Endothelial cell of umbilical vein (primary cell): ENCODE measurements at regions of chr22 and their contacts with region 1.

Region 1: DNA sequence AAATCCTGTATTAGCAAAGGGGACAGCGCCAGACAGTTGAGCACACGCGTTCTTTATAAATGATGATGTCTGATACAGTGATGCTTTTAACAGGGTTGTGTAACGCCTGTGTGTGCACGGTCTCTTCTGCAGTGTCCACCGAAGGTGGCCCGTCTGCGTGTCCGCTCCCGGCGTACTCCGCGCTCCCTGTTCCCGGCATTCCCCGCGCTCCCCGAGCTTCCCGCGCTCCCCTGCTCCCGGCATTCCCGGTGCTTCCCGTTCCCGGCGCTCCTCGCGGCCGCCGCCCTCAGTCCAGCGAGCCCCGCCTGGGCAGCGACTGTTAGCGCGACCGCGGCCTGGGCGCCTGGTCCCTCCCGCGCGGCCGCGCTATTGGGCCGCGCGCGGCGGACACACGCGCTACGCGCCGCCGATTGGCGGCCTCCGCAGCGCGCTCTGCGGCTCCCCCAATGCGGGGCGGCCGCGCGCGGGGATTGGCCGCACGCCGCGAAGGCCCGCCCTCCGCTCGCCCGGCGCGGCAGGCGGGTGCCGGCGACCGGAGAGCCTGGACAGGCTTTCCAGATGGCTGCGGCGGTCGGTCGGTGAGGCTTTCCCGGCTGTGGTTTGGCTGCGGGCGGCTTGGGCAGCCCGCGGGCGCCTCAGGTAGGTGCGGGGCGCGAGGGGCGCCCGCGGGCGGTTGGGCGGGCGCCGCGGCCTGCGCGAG is at the start of gene DGCR8:
- DNase-seq: peak; percentile 96
- H3K4me3 ChIP-seq: peak within 1 kb of the TSS; percentile 60 to 96 (median 78)
- H3K27ac ChIP-seq: peak within 1 kb of the TSS; percentile 85
- H3K4me1 ChIP-seq: peaks cover 19% of the 10 kb centered on the region
- H3K27me3 ChIP-seq: no peaks in the 10 kb centered on the region
- CTCF ChIP-seq: no peak
- POLR2A ChIP-seq: peak; percentile 95
- total RNA-seq, gene DGCR8: 64.2 and 69.7 TPM in 2 replicates

Region 2: DNA sequence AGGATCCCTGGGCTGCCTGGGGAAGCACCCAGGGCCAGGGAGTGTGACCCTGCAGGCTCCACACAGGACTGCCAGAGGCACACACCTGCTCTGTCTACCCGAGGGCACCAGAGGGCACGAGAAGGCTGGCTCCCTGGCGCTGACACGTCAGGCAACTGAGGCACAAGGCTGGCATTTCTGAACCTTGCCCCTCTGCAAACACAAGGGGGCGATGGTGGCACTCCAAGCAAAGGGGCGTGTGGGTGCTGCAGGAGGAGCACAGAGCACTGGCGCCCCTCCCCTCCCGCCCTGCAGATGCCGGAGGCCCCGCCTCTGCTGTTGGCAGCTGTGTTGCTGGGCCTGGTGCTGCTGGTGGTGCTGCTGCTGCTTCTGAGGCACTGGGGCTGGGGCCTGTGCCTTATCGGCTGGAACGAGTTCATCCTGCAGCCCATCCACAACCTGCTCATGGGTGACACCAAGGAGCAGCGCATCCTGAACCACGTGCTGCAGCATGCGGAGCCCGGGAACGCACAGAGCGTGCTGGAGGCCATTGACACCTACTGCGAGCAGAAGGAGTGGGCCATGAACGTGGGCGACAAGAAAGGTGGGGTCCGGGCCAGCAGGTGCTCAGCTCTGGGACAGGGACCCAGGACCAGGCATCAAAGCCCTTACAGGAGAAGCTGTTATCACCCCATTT is 117.5 kb before region 1 on chr22:
- CTCF ChIA-PET with region 1: no interaction called
- POLR2A ChIA-PET with region 1: no interaction called
- dilution Hi-C with region 1: no loop called
- intact Hi-C with region 1: loop called (anchors 2 kb)
- DNase-seq: peak; percentile 75
- H3K4me3 ChIP-seq: no peak overlapping the region
- H3K27ac ChIP-seq: peak overlapping the region; percentile 4
- H3K4me1 ChIP-seq: peaks cover 28% of the 10 kb centered on the region
- H3K27me3 ChIP-seq: no peaks in the 10 kb centered on the region
- CTCF ChIP-seq: peak; percentile 54 to 83
- POLR2A ChIP-seq: no peak

Region 3: DNA sequence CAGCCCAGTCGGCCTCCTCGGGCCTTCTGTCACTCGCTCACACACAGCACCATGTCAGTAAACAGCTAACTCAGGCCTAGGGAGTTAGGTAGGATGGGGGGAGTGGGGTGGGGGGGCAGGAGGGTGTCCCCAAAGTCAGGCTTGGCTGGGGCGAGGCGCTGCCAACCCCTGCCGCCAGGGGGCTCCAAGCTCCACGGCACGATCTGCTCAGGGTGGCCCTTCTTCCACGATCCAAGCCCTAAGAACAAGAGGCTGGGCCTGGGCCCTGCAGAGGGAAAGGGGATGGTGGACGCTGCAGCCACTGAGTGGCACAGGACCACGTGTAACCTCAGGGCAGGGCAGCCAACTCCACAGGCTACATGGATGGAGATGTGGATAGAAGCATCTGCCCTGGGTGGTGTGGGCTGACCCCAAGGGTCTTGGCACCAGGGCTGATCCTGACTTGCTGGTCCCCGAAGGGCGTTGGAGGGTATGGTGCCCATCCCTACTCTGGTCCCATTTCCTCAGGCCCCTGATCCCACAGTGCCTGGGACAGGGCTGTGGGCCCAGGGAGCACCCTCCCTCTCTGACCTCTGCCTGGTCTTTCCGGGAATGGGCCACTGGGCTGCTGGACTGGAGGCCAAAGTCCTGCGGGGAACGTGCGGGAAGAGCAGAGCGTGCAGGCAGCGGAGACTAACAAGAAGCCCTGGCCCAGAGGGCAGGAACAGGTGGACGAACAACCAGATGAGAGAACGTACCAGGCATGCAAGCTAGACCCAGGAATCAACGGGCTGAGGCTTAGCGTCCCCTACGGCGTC is 109.2 kb before region 1 on chr22:
- CTCF ChIA-PET with region 1: interaction called, 3 read pairs
- POLR2A ChIA-PET with region 1: no interaction called
- dilution Hi-C with region 1: no loop called
- intact Hi-C with region 1: loop called (anchors 1 kb)
- DNase-seq: peak; percentile 56
- H3K4me3 ChIP-seq: no peak overlapping the region
- H3K27ac ChIP-seq: no peak overlapping the region
- H3K4me1 ChIP-seq: peaks cover 26% of the 10 kb centered on the region
- H3K27me3 ChIP-seq: no peaks in the 10 kb centered on the region
- CTCF ChIP-seq: peak; percentile 69 to 96
- POLR2A ChIP-seq: no peak

Region 4: GRCh38 chr22:20020533-20021195 is 59.2 kb before region 1 on chr22 and contains the start of gene TANGO2:
- CTCF ChIA-PET with region 1: no interaction called
- POLR2A ChIA-PET with region 1: no interaction called
- dilution Hi-C with region 1: no loop called
- intact Hi-C with region 1: loop called (anchors 2 kb)
- DNase-seq: peak; percentile 88
- H3K4me3 ChIP-seq: peak within 1 kb of the TSS; percentile 69 to 82 (median 81)
- H3K27ac ChIP-seq: peak within 1 kb of the TSS; percentile 74
- H3K4me1 ChIP-seq: peaks cover 17% of the 10 kb centered on the region
- H3K27me3 ChIP-seq: no peaks in the 10 kb centered on the region
- CTCF ChIP-seq: no peak
- POLR2A ChIP-seq: peak; percentile 84
- total RNA-seq, gene TANGO2: 33.2 and 40.0 TPM in 2 replicates

Region 5: GRCh38 chr22:20116951-20117645 is 37.2 kb after region 1 on chr22 and contains the start of gene TRMT2A:
- CTCF ChIA-PET with region 1: no interaction called
- POLR2A ChIA-PET with region 1: interaction called, 3 read pairs
- dilution Hi-C with region 1: no loop called
- intact Hi-C with region 1: loop called (anchors 1 kb)
- DNase-seq: peak; percentile 99
- H3K4me3 ChIP-seq: peak within 1 kb of the TSS; percentile 84 to 92 (median 87)
- H3K27ac ChIP-seq: peak within 1 kb of the TSS; percentile 67
- H3K4me1 ChIP-seq: peaks cover 22% of the 10 kb centered on the region
- H3K27me3 ChIP-seq: no peaks in the 10 kb centered on the region
- CTCF ChIP-seq: peak; percentile 11 to 25
- POLR2A ChIP-seq: no peak
- total RNA-seq, gene TRMT2A: 50.5 and 51.2 TPM in 2 replicates

Region 6: DNA sequence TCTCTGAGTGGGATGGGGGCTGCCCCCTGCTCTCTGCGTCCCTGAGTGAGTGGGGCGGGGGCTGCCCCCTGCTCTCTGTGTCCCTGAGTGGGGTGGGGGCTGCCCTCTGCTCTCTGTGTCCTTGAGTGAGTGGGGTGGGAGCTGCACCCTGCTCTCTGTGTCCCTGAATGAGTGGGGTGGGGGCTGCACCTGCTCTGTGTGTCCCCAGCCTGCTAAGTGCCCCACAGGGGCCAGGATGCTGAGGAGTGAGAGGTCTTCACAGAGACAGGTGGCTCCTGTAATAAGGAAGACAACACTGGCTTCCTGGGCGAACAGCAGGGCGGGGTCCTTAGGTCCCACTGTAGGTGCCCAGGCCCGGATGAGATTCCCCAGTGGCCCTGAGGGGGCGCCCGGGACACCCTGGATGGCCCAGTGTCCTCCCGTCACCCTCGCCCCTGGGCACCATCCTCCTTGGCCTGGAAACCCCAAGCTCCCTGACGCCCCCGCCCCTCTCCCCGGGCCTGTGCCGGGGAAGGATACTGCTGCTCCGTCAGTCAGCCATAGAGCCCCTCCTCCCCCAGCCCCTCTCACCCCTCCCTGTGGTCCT is 74.8 kb after region 1 on chr22:
- CTCF ChIA-PET with region 1: no interaction called
- POLR2A ChIA-PET with region 1: no interaction called
- dilution Hi-C with region 1: no loop called
- intact Hi-C with region 1: no loop called
- DNase-seq: no peak
- H3K4me3 ChIP-seq: peak overlapping the region; percentile 23 to 46 (median 36)
- H3K27ac ChIP-seq: no peak overlapping the region
- H3K4me1 ChIP-seq: peaks cover 5% of the 10 kb centered on the region
- H3K27me3 ChIP-seq: no peaks in the 10 kb centered on the region
- CTCF ChIP-seq: no peak
- POLR2A ChIP-seq: no peak